Breast epithelium (tissue), 4 donors: ENCODE measurements at regions of chr16 and their contacts with region 1.

Region 1: GRCh38 chr16:23676924-23677480 is 1.7 kb upstream of the PLK1 start:
- DNase-seq: no peak
- H3K4me3 ChIP-seq: no peak overlapping the region
- H3K27ac ChIP-seq: no peak overlapping the region
- H3K4me1 ChIP-seq: no peaks in the 10 kb centered on the region
- H3K27me3 ChIP-seq: no peaks in the 10 kb centered on the region
- CTCF ChIP-seq: no peak
- POLR2A ChIP-seq: no peak

Region 2: GRCh38 chr16:23650674-23651416 is 26.2 kb before region 1 on chr16:
- intact Hi-C with region 1: loop called (anchors 1 kb)
- DNase-seq: no peak
- H3K4me3 ChIP-seq: no peak overlapping the region
- H3K27ac ChIP-seq: no peak overlapping the region
- H3K4me1 ChIP-seq: no peaks in the 10 kb centered on the region
- H3K27me3 ChIP-seq: no peaks in the 10 kb centered on the region
- CTCF ChIP-seq: no peak
- POLR2A ChIP-seq: no peak